GM12878 (cell line): ENCODE measurements at regions of chr12 and their contacts with region 1.

Region 1: DNA sequence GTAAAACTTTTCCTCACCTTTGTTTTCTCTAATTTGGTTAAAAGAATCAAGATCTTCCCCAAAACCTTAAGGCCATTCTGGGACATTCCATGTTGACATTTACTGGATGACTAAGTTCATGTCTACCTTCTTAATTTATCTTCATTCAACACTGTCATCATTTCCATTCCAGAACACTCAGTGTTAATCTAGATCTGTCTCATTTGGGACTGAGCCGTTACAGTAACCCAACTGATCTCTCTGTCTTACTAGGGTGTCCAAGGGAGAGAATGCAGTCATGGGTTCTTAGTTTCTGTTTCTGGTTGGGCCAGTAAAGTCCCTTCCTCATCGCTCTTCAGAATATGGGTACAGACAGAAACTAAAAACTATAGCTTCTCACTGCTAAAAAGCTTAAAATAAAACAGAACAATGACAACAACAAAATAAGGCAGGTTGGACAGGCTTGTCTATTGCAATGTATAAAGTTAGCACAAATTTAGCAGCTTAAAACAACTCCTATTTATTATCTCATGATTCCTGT is 144.8 kb downstream of the ASCL1 start:
- DNase-seq: peak; percentile 72
- ATAC-seq: peak; percentile 91
- H3K4me3 ChIP-seq: no peak overlapping the region
- H3K27ac ChIP-seq: peak overlapping the region; percentile 82
- H3K4me1 ChIP-seq: peaks cover 29% of the 10 kb centered on the region
- H3K27me3 ChIP-seq: no peaks in the 10 kb centered on the region
- CTCF ChIP-seq: no peak
- EP300 ChIP-seq: peak; percentile 73 to 89; a peak in 3 of 4 replicates
- POLR2A ChIP-seq: no peak
- RAD21 ChIP-seq: peak; percentile 22; the same call in 1 of the 2 replicates

Region 2: GRCh38 chr12:101982307-101982706 is 1120.0 kb before region 1 on chr12:
- CTCF ChIA-PET with region 1: no interaction called
- POLR2A ChIA-PET with region 1: no interaction called
- RAD21 ChIA-PET with region 1: no interaction called
- SMC1A ChIA-PET with region 1: no interaction called
- in situ Hi-C with region 1: no loop called
- intact Hi-C with region 1: no loop called
- DNase-seq: no peak
- ATAC-seq: no peak
- H3K4me3 ChIP-seq: no peak overlapping the region
- H3K27ac ChIP-seq: no peak overlapping the region
- H3K4me1 ChIP-seq: no peaks in the 10 kb centered on the region
- H3K27me3 ChIP-seq: no peaks in the 10 kb centered on the region
- CTCF ChIP-seq: no peak
- EP300 ChIP-seq: no peak
- POLR2A ChIP-seq: no peak
- RAD21 ChIP-seq: no peak

Region 3: GRCh38 chr12:102527171-102527720 is 575.0 kb before region 1 on chr12:
- CTCF ChIA-PET with region 1: no interaction called
- POLR2A ChIA-PET with region 1: no interaction called
- RAD21 ChIA-PET with region 1: no interaction called
- SMC1A ChIA-PET with region 1: no interaction called
- in situ Hi-C with region 1: no loop called
- intact Hi-C with region 1: no loop called
- DNase-seq: no peak
- ATAC-seq: no peak
- H3K4me3 ChIP-seq: no peak overlapping the region
- H3K27ac ChIP-seq: no peak overlapping the region
- H3K4me1 ChIP-seq: no peaks in the 10 kb centered on the region
- H3K27me3 ChIP-seq: no peaks in the 10 kb centered on the region
- CTCF ChIP-seq: no peak
- EP300 ChIP-seq: no peak
- POLR2A ChIP-seq: no peak
- RAD21 ChIP-seq: no peak

Region 4: GRCh38 chr12:102990419-102990818 is 111.9 kb before region 1 on chr12:
- CTCF ChIA-PET with region 1: interaction called, 12 read pairs
- POLR2A ChIA-PET with region 1: interaction called, 4 read pairs
- RAD21 ChIA-PET with region 1: interaction called, 25 read pairs
- SMC1A ChIA-PET with region 1: interaction called, 29 read pairs
- in situ Hi-C with region 1: no loop called
- intact Hi-C with region 1: no loop called
- DNase-seq: no peak
- ATAC-seq: peak; percentile 49
- H3K4me3 ChIP-seq: no peak overlapping the region
- H3K27ac ChIP-seq: no peak overlapping the region
- H3K4me1 ChIP-seq: no peaks in the 10 kb centered on the region; the same call in 1 of the 2 replicates
- H3K27me3 ChIP-seq: no peaks in the 10 kb centered on the region
- CTCF ChIP-seq: 0 out of 6 replicates have a peak, but pooled peaks of 1 of the 3 experiments have one; percentile 14
- EP300 ChIP-seq: no peak
- POLR2A ChIP-seq: no peak
- RAD21 ChIP-seq: peak; percentile 46; the same call in 1 of the 2 replicates

Region 5: GRCh38 chr12:103085541-103085940 is 16.7 kb before region 1 on chr12:
- CTCF ChIA-PET with region 1: interaction called, 11 read pairs
- POLR2A ChIA-PET with region 1: no interaction called
- RAD21 ChIA-PET with region 1: interaction called, 5 read pairs
- SMC1A ChIA-PET with region 1: interaction called, 12 read pairs
- in situ Hi-C with region 1: no loop called
- intact Hi-C with region 1: no loop called
- DNase-seq: no peak
- ATAC-seq: peak; percentile 80
- H3K4me3 ChIP-seq: no peak overlapping the region
- H3K27ac ChIP-seq: no peak overlapping the region
- H3K4me1 ChIP-seq: no peaks in the 10 kb centered on the region
- H3K27me3 ChIP-seq: no peaks in the 10 kb centered on the region
- CTCF ChIP-seq: no peak
- EP300 ChIP-seq: no peak; a peak in 1 of 4 replicates
- POLR2A ChIP-seq: no peak
- RAD21 ChIP-seq: no peak

Region 6: DNA sequence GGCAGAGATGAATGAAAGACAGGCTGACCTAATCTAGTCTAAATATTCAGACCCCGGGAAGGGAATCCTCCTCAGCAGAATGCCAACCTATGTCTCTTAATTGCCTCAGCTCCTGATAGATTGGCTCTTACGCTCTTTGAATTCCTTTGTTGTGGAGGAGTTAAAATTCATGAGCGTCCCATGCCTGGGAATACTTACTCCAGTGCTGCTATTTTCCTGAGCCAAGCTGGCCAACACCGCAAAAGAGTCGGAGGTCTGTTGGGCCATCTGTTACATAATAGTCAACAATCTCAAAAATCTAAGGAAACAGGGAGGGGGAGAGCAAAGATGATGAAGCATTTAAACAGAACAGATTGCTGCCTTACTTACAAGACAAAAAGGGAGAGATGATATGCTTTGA is 38.0 kb after region 1 on chr12:
- CTCF ChIA-PET with region 1: no interaction called
- POLR2A ChIA-PET with region 1: interaction called, 3 read pairs
- RAD21 ChIA-PET with region 1: interaction called, 25 read pairs
- SMC1A ChIA-PET with region 1: interaction called, 8 read pairs
- in situ Hi-C with region 1: no loop called
- intact Hi-C with region 1: no loop called
- DNase-seq: no peak
- ATAC-seq: no peak
- H3K4me3 ChIP-seq: no peak overlapping the region
- H3K27ac ChIP-seq: no peak overlapping the region
- H3K4me1 ChIP-seq: no peaks in the 10 kb centered on the region
- H3K27me3 ChIP-seq: no peaks in the 10 kb centered on the region
- CTCF ChIP-seq: no peak
- EP300 ChIP-seq: no peak
- POLR2A ChIP-seq: no peak
- RAD21 ChIP-seq: no peak